ENCODE measurements at regions of chr7 and their contacts with region 1.

Region 1: DNA sequence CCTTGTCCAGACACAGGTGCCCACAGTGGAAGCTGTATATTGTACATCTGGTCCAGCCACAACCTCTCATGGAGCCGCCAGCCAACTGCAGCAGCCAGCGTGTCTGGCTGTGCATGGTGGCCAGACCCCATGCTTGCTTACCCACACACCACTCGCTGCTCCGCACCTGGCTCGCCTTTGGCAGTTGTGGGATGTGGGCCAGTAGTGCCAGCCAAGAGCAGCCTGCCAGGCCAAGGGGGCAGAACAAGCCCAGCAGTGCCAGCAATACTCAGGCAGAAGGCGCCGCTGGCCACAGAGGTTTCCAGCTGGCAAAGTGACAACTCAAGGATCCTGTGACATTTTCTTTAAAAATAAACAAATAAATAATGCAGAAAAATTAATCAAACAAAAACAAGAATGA is 11.7 kb upstream of the TMEM243 start:
- DNase-seq: no peak
- H3K4me3 Mint-ChIP-seq: no peak overlapping the region
- H3K27ac Mint-ChIP-seq: no peak overlapping the region
- H3K4me1 Mint-ChIP-seq: peaks cover 11% of the 10 kb centered on the region
- H3K27me3 Mint-ChIP-seq: no peaks in the 10 kb centered on the region

Region 2: GRCh38 chr7:86926732-86927131 is 304.5 kb before region 1 on chr7:
- CTCF ChIA-PET with region 1: interaction called, 14 read pairs
- intact Hi-C with region 1: no loop called
- DNase-seq: peak; percentile 43
- H3K4me3 Mint-ChIP-seq: no peak overlapping the region
- H3K27ac Mint-ChIP-seq: no peak overlapping the region
- H3K4me1 Mint-ChIP-seq: peaks cover 16% of the 10 kb centered on the region
- H3K27me3 Mint-ChIP-seq: peaks cover 2% of the 10 kb centered on the region

Region 3: GRCh38 chr7:87252166-87252565 is 20.9 kb after region 1 on chr7:
- CTCF ChIA-PET with region 1: interaction called, 10 read pairs
- intact Hi-C with region 1: no loop called
- DNase-seq: no peak
- H3K4me3 Mint-ChIP-seq: no peak overlapping the region
- H3K27ac Mint-ChIP-seq: no peak overlapping the region
- H3K4me1 Mint-ChIP-seq: no peaks in the 10 kb centered on the region
- H3K27me3 Mint-ChIP-seq: peaks cover 17% of the 10 kb centered on the region

Region 4: DNA sequence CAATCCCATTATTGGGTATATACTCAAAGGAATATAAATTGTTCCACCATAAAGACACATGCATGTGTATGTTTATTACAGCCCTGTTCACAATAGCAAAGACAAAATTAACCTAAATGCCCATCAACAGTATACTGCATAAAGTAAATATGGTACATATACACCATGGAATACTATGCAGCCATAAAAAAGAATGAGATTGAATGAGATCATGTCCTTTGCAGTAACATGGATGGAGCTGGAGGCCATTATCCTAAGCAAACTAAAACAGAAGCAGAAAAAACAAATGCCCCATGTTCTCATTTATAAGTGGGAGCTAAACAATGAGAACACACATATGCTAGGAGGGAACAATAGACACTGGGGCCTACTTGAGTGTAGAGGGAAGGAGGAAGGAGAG is 69.5 kb after region 1 on chr7:
- CTCF ChIA-PET with region 1: no interaction called
- intact Hi-C with region 1: no loop called
- DNase-seq: no peak
- H3K4me3 Mint-ChIP-seq: no peak overlapping the region
- H3K27ac Mint-ChIP-seq: no peak overlapping the region
- H3K4me1 Mint-ChIP-seq: no peaks in the 10 kb centered on the region
- H3K27me3 Mint-ChIP-seq: peaks cover 2% of the 10 kb centered on the region

Region 5: GRCh38 chr7:87398446-87398845 is 167.2 kb after region 1 on chr7:
- CTCF ChIA-PET with region 1: no interaction called
- intact Hi-C with region 1: no loop called
- DNase-seq: no peak
- H3K4me3 Mint-ChIP-seq: no peak overlapping the region
- H3K27ac Mint-ChIP-seq: no peak overlapping the region
- H3K4me1 Mint-ChIP-seq: no peaks in the 10 kb centered on the region
- H3K27me3 Mint-ChIP-seq: no peaks in the 10 kb centered on the region

Region 6: DNA sequence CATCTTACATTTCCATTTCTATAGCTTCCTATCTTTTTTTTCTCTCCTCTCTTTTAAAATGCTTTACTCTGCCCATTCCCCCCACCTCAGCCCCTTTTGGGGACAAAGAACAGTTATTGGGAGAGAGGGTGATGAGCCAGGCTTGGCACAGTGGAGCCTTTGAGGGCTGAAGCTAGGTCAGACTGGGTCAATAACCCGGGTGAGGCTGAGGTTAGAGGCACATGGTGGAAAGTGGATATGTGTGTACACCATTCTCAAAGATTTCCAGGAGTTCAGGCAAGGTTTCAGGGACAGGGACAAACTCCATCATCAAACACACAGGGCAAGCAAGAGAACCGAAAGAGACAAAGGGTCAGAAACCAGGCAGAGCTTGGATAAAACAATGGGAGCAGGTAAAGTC is 232.7 kb after region 1 on chr7:
- CTCF ChIA-PET with region 1: no interaction called
- intact Hi-C with region 1: no loop called
- DNase-seq: no peak
- H3K4me3 Mint-ChIP-seq: no peak overlapping the region
- H3K27ac Mint-ChIP-seq: no peak overlapping the region
- H3K4me1 Mint-ChIP-seq: no peaks in the 10 kb centered on the region
- H3K27me3 Mint-ChIP-seq: peaks cover 24% of the 10 kb centered on the region

Region 7: GRCh38 chr7:87735371-87735770 is 504.1 kb after region 1 on chr7:
- CTCF ChIA-PET with region 1: no interaction called
- intact Hi-C with region 1: no loop called
- DNase-seq: no peak
- H3K4me3 Mint-ChIP-seq: no peak overlapping the region
- H3K27ac Mint-ChIP-seq: no peak overlapping the region
- H3K4me1 Mint-ChIP-seq: no peaks in the 10 kb centered on the region
- H3K27me3 Mint-ChIP-seq: no peaks in the 10 kb centered on the region